CD4-positive, alpha-beta memory T cell (primary cell): ENCODE measurements at regions of chr22 and their contacts with region 1.

Region 1: GRCh38 chr22:22787786-22788459 is 99.7 kb upstream of the IGLL5 start:
- DNase-seq: peak; percentile 66 to 75 (median 70)
- H3K4me3 ChIP-seq: no peak overlapping the region
- H3K4me3 Mint-ChIP-seq: peak overlapping the region in 7 of 8 donors; percentile 6 to 61 (median 53)
- H3K27ac ChIP-seq: peak overlapping the region; percentile 49
- H3K27ac Mint-ChIP-seq: peak overlapping the region; percentile 79 to 94 (median 90)
- H3K4me1 ChIP-seq: peaks cover 58% of the 10 kb centered on the region
- H3K4me1 Mint-ChIP-seq: peaks cover 34 to 75% (median 52%) of the 10 kb centered on the region in 4 donors
- H3K27me3 ChIP-seq: no peaks in the 10 kb centered on the region
- H3K27me3 Mint-ChIP-seq: no peaks in the 10 kb centered on the region

Region 2: DNA sequence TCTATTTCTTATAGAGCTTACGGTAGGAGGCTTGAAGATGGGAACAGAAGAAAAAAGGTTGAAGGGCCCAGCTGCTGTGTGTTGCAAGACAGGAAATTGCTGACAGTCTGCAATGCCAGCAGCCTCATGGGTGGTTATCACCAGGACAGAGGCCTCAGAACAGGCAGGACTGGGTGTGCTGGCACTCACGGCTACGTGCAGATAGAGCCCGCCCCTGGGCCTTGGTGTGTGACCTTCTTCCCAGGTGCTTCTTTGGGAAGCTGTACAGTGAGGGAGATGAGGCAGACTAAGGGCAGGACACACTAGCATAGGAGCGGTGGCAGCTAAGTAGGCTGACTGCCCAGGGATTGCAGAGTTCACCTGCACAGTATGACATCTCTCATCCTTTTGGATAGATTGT is 241.4 kb before region 1 on chr22:
- CTCF ChIA-PET with region 1: no interaction called
- POLR2A ChIA-PET with region 1: no interaction called
- intact Hi-C with region 1: no loop called
- DNase-seq: no peak
- H3K4me3 ChIP-seq: no peak overlapping the region
- H3K4me3 Mint-ChIP-seq: no peak overlapping the region
- H3K27ac ChIP-seq: no peak overlapping the region
- H3K27ac Mint-ChIP-seq: no peak overlapping the region
- H3K4me1 ChIP-seq: no peaks in the 10 kb centered on the region
- H3K4me1 Mint-ChIP-seq: no peaks in the 10 kb centered on the region
- H3K27me3 ChIP-seq: no peaks in the 10 kb centered on the region
- H3K27me3 Mint-ChIP-seq: peaks cover 1 to 6% of the 10 kb centered on the region in 2 donors

Region 3: DNA sequence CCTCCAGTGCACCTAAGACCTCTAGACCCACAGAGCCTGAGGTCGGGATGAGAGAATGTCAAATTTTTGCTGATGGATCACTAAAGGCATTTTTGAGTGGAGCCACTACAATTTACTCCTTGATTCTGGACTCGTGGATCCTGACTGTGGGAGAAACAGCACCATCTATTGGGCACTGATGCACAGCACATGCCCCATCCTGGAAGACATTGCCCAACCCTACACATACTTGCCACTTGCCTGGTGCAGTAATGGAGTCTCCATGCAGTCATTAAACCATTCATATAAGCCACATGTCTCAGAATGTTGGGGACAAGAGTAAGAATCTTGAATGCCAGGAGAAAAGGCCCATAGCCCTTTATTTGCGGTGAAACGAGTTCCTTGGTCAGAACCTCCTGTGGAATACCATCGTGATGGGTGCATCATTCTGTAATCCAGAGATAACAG is 39.6 kb before region 1 on chr22:
- CTCF ChIA-PET with region 1: interaction called, 96 read pairs
- POLR2A ChIA-PET with region 1: interaction called, 71 read pairs
- intact Hi-C with region 1: loop called (anchors 1 kb)
- DNase-seq: peak in 4 of 5 donors; percentile 19 to 33 (median 24)
- H3K4me3 ChIP-seq: no peak overlapping the region
- H3K4me3 Mint-ChIP-seq: no peak overlapping the region
- H3K27ac ChIP-seq: no peak overlapping the region
- H3K27ac Mint-ChIP-seq: peak overlapping the region in 3 of 7 donors; percentile 17 to 74 (median 64)
- H3K4me1 ChIP-seq: peaks cover 11% of the 10 kb centered on the region
- H3K4me1 Mint-ChIP-seq: peaks cover 10 to 31% (median 24%) of the 10 kb centered on the region in 4 donors
- H3K27me3 ChIP-seq: no peaks in the 10 kb centered on the region
- H3K27me3 Mint-ChIP-seq: peaks cover 0 to 4% of the 10 kb centered on the region in 2 donors

Region 4: GRCh38 chr22:22802339-22802970 is 14.5 kb after region 1 on chr22:
- CTCF ChIA-PET with region 1: interaction called, 164 read pairs
- POLR2A ChIA-PET with region 1: interaction called, 19 read pairs
- intact Hi-C with region 1: loop called (anchors 1 kb)
- DNase-seq: peak in 2 of 5 donors; percentile 24 to 38
- H3K4me3 ChIP-seq: no peak overlapping the region
- H3K4me3 Mint-ChIP-seq: peak overlapping the region in 1 of 8 donors; percentile 31
- H3K27ac ChIP-seq: no peak overlapping the region
- H3K27ac Mint-ChIP-seq: peak overlapping the region in 1 of 7 donors; percentile 50
- H3K4me1 ChIP-seq: no peaks in the 10 kb centered on the region
- H3K4me1 Mint-ChIP-seq: peaks cover 12 to 40% (median 28%) of the 10 kb centered on the region in 4 donors
- H3K27me3 ChIP-seq: no peaks in the 10 kb centered on the region
- H3K27me3 Mint-ChIP-seq: no peaks in the 10 kb centered on the region

Region 5: GRCh38 chr22:22818861-22819855 is 31.2 kb after region 1 on chr22:
- CTCF ChIA-PET with region 1: interaction called, 27 read pairs
- POLR2A ChIA-PET with region 1: interaction called, 127 read pairs
- intact Hi-C with region 1: no loop called
- DNase-seq: peak; percentile 56 to 59 (median 58)
- H3K4me3 ChIP-seq: peak overlapping the region in 1 of 2 donors; percentile 62
- H3K4me3 Mint-ChIP-seq: peak overlapping the region; percentile 76 to 91 (median 81)
- H3K27ac ChIP-seq: peak overlapping the region; percentile 58
- H3K27ac Mint-ChIP-seq: peak overlapping the region; percentile 88 to 97 (median 96)
- H3K4me1 ChIP-seq: peaks cover 96% of the 10 kb centered on the region
- H3K4me1 Mint-ChIP-seq: peaks cover 84 to 99% (median 94%) of the 10 kb centered on the region in 4 donors
- H3K27me3 ChIP-seq: no peaks in the 10 kb centered on the region
- H3K27me3 Mint-ChIP-seq: no peaks in the 10 kb centered on the region

Region 6: GRCh38 chr22:22855617-22856308 is 67.8 kb after region 1 on chr22:
- CTCF ChIA-PET with region 1: interaction called, 51 read pairs
- POLR2A ChIA-PET with region 1: interaction called, 6 read pairs
- intact Hi-C with region 1: no loop called
- DNase-seq: peak in 4 of 5 donors; percentile 11 to 25 (median 16)
- H3K4me3 ChIP-seq: no peak overlapping the region
- H3K4me3 Mint-ChIP-seq: no peak overlapping the region
- H3K27ac ChIP-seq: no peak overlapping the region
- H3K27ac Mint-ChIP-seq: peak overlapping the region in 4 of 7 donors; percentile 1 to 74 (median 53)
- H3K4me1 ChIP-seq: no peaks in the 10 kb centered on the region
- H3K4me1 Mint-ChIP-seq: peaks cover 3 to 11% (median 5%) of the 10 kb centered on the region in 4 donors
- H3K27me3 ChIP-seq: no peaks in the 10 kb centered on the region
- H3K27me3 Mint-ChIP-seq: peaks cover 0 to 1% of the 10 kb centered on the region in 2 donors

Region 7: GRCh38 chr22:22877523-22878210 is 89.7 kb after region 1 on chr22:
- CTCF ChIA-PET with region 1: interaction called, 172 read pairs
- POLR2A ChIA-PET with region 1: interaction called, 13 read pairs
- intact Hi-C with region 1: loop called (anchors 1 kb)
- DNase-seq: peak; percentile 72 to 74 (median 73)
- H3K4me3 ChIP-seq: no peak overlapping the region
- H3K4me3 Mint-ChIP-seq: no peak overlapping the region
- H3K27ac ChIP-seq: no peak overlapping the region
- H3K27ac Mint-ChIP-seq: peak overlapping the region in 2 of 7 donors; percentile 42 to 76
- H3K4me1 ChIP-seq: no peaks in the 10 kb centered on the region
- H3K4me1 Mint-ChIP-seq: peaks cover 0 to 5% (median 2%) of the 10 kb centered on the region in 4 donors
- H3K27me3 ChIP-seq: no peaks in the 10 kb centered on the region
- H3K27me3 Mint-ChIP-seq: no peaks in the 10 kb centered on the region